ENCODE measurements at regions of chr11 and their contacts with region 1.

Region 1: DNA sequence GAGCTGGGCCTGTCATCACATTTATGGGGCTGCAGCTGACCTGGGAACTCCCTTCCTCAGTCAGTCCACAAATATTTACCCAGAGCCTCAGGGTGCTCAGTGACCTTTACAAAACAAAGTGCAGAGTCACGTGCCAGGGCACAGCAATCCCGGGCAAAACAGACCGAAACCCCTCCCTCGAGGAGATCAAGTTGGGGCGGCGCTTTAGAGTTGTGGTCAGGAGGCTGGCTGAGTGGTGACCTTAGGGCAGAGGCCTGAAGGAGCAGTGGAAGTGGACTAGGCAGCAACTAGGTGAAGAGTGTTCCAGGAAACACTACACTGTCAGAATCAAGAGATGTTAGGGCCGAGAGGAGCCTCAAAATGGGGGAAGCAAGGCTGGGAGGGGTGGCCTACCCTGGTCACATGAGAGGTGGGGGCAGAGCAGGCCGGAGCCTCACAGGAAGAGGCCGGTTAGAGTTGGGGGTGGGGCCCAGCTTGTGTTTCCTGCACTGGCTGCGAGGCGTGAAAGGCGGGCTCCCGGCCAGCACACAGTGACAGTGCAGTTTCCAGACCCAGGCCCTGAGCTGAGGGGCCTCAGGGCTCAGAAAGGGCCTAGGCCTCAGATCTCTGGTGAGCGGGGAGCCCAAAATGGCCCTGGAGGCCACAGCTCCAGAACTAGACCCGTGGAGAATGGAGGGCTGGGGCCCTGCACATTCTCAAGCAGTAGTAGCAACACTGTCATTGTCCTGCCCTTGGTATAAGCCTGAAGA is 3.7 kb upstream of the NEAT1 start:
- DNase-seq: peak; percentile 93 to 97 (median 96)
- H3K4me3 ChIP-seq: peak overlapping the region; percentile 86
- H3K27ac ChIP-seq: peak overlapping the region; percentile 96 to 97
- H3K4me1 ChIP-seq: peaks cover 23% of the 10 kb centered on the region
- H3K27me3 ChIP-seq: no peaks in the 10 kb centered on the region
- CTCF ChIP-seq: no peak
- EP300 ChIP-seq: peak; percentile 71
- POLR2A ChIP-seq: peak; percentile 36

Region 2: DNA sequence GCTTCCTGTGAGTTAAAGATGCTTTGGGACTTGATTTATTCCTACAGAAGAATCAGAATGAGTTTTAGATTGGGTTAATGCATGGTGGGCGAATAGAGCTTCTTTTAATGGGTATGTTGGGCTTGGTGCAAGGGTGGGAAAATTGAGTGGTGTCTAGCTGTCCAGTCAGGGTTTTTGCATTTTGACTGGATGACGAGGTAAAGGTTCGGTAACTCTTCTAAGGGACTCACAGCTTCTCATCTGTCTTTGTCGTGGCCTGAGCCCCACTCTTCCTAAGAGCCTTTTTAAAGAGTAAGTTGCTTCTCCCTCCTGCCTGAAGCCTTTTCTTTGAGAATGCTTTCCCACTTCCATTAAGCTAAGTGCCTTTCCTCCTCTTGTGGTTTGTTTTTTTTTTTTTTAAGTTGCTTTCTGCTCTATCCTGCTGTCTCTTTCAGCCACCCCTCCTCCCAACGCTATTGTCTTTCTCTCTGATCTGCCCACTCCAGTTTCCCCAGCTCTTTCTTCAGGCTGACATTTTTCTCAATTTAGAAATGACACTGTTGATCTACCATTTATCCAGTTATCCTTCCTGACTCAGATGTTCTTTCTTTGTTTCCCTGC is 84.1 kb before region 1 on chr11:
- intact Hi-C with region 1: no loop called
- DNase-seq: no peak
- H3K4me3 ChIP-seq: peak overlapping the region; percentile 89
- H3K27ac ChIP-seq: peak overlapping the region; percentile 76 to 85
- H3K4me1 ChIP-seq: peaks cover 8% of the 10 kb centered on the region
- H3K27me3 ChIP-seq: no peaks in the 10 kb centered on the region
- CTCF ChIP-seq: no peak
- EP300 ChIP-seq: no peak
- POLR2A ChIP-seq: no peak

Region 3: DNA sequence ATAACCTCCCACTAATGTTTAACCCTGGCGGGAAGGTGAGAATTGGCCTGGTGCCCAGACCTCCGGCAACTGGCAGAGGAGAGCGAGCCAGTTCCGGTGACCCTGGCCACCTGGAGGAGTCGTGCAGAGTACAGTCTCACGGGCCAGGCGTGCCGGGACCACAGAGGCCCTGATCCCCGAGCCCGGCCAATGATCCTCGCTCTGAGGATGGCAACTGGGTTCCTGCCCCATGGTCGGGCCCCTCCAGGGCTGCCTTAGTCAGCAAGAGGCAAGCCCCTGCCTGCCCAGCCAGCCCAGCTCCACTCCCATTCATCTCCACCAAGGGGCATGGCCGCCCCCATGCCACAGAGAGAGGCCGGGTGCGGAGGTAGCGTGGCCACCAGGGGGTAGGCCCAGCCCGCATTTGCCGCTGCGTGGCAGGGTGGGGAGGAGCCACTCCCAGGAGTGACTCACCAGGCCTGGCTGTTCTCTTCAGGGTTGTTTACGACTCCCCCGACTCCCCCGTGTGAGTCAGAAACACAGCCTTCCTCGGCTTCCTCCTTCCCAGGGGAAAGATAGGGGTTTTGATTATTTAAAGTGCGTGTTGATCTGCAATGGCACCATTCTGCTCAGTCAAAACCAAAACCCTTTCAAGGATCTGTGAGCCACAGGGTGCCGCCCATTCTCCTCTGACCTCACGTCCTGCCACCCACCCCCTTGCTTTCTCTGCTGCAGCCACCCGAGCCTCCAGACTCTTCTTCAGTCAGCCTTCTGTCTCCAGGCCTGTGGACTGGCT is 36.7 kb before region 1 on chr11 and contains the start of gene SLC25A45:
- intact Hi-C with region 1: loop called in 2 of 4 experiments (anchors 5 kb)
- DNase-seq: peak; percentile 92 to 96 (median 94)
- H3K4me3 ChIP-seq: peak within 1 kb of the TSS; percentile 42
- H3K27ac ChIP-seq: peak within 1 kb of the TSS; percentile 93 to 96
- H3K4me1 ChIP-seq: peaks cover 16% of the 10 kb centered on the region
- H3K27me3 ChIP-seq: no peaks in the 10 kb centered on the region
- CTCF ChIP-seq: peak; percentile 71 to 100 (median 99)
- EP300 ChIP-seq: peak; percentile 52
- POLR2A ChIP-seq: peak; percentile 53
- total RNA-seq, gene SLC25A45: 3.2 to 8.7 (median 4.6) TPM

Region 4: DNA sequence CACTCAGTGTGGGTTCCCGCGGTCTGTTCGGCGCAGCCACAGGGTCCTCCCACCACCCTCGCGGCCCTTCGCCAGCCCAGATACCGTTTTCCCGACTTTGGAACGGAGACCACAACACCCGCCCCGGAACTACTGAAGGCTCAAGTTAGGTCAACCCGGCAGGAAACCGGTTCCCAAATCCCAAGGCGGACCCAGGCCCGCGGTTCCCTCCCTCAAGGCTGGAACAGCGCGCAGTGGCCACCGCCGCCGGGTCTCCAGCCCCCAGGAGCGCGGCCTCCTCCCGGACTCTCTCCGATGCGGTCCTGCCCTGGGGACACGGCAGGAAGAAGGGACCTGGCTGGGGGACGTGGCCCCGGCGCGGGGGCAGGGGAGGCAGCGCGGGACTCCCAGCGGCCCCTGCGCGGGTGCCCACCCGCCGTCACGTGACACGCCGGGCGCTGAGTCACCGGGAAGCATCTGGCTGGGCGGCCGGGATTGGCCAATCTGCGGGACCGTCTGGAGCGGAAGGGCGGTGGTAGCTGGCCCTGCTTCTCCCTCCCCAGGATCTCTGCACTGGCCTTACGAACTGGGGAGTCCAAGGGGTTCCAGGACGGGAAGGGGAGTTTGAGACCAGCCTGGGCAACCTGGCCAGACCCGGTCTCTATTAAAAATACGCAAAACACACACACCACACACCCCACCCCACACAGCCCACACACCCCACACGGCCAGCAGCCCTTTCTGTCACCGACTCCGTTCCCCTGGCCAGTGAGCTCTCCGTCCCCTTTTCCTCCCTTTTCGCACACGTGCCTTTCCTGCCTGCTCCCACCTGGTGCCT is 58.5 kb after region 1 on chr11:
- intact Hi-C with region 1: loop called in 1 of 4 experiments (anchors 5 kb)
- DNase-seq: peak; percentile 97 to 98 (median 97)
- H3K4me3 ChIP-seq: peak overlapping the region; percentile 94
- H3K27ac ChIP-seq: peak overlapping the region; percentile 93 to 96
- H3K4me1 ChIP-seq: peaks cover 12% of the 10 kb centered on the region
- H3K27me3 ChIP-seq: no peaks in the 10 kb centered on the region
- CTCF ChIP-seq: peak in 1 of 3 donors; percentile 27
- EP300 ChIP-seq: peak; percentile 80
- POLR2A ChIP-seq: peak; percentile 93

Region 5: GRCh38 chr11:65497141-65498041 is 78.5 kb after region 1 on chr11:
- intact Hi-C with region 1: loop called (anchors 2 to 5 kb)
- DNase-seq: peak; percentile 99 to 100 (median 99)
- H3K4me3 ChIP-seq: peak overlapping the region; percentile 82
- H3K27ac ChIP-seq: peak overlapping the region; percentile 91 to 94
- H3K4me1 ChIP-seq: peaks cover 16% of the 10 kb centered on the region
- H3K27me3 ChIP-seq: no peaks in the 10 kb centered on the region
- CTCF ChIP-seq: peak in 1 of 3 donors; percentile 23
- EP300 ChIP-seq: peak; percentile 98
- POLR2A ChIP-seq: no peak